Naive thymus-derived CD8-positive, alpha-beta T cell (primary cell): ENCODE measurements at regions of chr1 and their contacts with region 1.

Region 1: GRCh38 chr1:160539990-160540858 is 17.2 kb upstream of the SLAMF6 start:
- DNase-seq: peak in 8 of 10 donors; percentile 28 to 71 (median 48)
- ATAC-seq: peak; percentile 87 to 94
- H3K4me3 Mint-ChIP-seq: peak overlapping the region; percentile 50 to 75 (median 68)
- H3K27ac Mint-ChIP-seq: peak overlapping the region; percentile 85 to 97 (median 92)
- H3K4me1 Mint-ChIP-seq: peaks cover 38 to 57% (median 54%) of the 10 kb centered on the region in 4 donors
- H3K27me3 Mint-ChIP-seq: no peaks in the 10 kb centered on the region

Region 2: DNA sequence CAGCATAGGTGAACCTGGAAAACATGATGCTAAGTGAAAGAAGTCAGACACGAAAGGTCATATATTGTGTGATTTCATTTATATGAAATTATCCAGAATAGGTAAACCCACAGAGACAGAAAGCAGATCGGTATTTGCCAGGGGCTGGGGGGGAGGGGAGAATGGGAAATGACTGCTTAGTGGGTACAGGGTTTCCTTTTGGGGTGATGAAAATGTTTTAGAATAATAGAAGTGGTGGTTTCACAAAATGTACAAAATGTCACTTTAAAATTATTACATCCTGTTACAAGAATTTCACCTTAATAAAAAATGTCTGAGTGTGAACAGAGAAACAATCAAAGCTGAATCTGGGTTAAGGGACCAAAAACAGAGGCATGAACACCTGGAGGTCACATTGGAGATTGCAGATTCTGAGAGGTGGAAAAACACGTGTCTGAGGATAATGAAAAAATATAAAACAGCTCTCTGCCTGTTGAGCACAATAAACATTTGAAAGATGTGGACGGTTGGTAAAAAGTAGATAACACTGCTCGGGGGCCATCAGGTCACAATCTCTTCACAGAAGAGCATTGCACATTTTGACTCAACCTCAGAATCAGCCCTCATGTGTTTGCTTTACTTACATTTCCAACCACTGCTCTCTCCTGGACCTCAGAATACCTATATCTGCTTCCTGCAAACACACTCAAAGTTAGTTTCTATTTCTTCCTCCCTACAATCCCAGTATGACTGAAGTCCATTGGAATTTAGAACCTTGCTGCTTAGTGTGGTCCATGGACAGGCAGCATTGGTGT is 20.4 kb before region 1 on chr1:
- POLR2A ChIA-PET with region 1: interaction called, 17 read pairs
- DNase-seq: peak in 3 of 10 donors; percentile 45 to 60 (median 53)
- ATAC-seq: peak; percentile 51 to 70
- H3K4me3 Mint-ChIP-seq: peak overlapping the region; percentile 73 to 96 (median 94)
- H3K27ac Mint-ChIP-seq: peak overlapping the region; percentile 91 to 98 (median 94)
- H3K4me1 Mint-ChIP-seq: peaks cover 63 to 95% (median 91%) of the 10 kb centered on the region in 4 donors
- H3K27me3 Mint-ChIP-seq: no peaks in the 10 kb centered on the region

Region 3: DNA sequence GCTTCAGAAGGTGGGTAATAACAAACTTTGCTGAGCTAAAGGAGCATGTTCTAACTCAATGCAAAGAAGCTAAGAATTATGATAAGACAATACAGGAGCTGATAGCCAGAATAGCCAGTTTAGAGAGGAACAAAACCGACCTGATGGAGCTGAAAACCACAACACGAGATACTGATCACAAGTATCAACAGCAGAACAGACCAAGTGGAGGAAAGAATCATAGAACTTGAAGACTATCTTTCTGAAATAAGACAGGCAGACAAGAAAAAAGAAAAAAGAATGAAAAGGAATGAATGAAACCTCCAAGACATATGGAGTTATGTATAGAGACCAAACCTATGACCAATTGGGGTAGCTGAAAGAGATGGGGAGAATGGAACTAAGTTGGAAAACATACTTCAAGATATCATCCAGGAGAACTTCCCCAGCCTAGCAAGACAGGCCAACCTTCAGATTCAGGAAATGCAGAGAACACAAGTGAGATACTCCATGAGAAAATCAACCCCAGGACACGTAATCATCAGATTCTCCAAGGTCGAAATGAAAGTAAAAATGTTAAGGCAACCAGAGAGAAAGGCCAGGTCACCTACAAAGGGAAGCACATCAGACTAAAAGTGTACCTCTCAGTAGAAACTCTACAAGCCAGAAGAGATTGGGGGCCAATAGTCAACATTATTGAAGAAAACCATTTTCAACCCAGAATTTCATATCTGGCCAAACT is 18.6 kb after region 1 on chr1:
- POLR2A ChIA-PET with region 1: interaction called, 11 read pairs
- DNase-seq: no peak
- ATAC-seq: no peak
- H3K4me3 Mint-ChIP-seq: peak overlapping the region; percentile 53 to 90 (median 75)
- H3K27ac Mint-ChIP-seq: peak overlapping the region; percentile 5 to 99 (median 93)
- H3K4me1 Mint-ChIP-seq: peaks cover 41 to 74% (median 66%) of the 10 kb centered on the region in 4 donors
- H3K27me3 Mint-ChIP-seq: no peaks in the 10 kb centered on the region